ENCODE measurements at regions of chr21 and their contacts with region 1.

Region 1: DNA sequence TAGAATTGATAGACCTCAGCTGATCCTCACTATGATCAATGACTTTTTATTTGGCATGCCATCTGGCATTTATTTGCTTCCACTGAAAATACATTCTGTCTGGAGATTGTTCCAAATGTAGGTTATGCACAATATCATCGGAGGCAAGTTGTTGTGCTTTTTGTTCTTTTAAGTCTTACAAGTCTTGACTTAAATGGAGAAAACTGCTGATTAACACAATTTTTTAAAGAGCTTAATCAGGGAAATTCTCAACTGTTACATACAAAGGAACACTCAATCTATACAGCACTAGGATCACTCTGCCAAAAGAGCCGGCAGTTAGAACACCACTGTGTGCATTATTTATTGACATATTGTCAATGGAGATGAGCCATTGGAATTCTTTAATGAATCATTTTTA is 19.2 kb downstream of the CYYR1 start:
- DNase-seq: no peak
- ATAC-seq: no peak

Region 2: GRCh38 chr21:26389971-26390641 is 163.8 kb before region 1 on chr21:
- intact Hi-C with region 1: no loop called
- DNase-seq: no peak
- ATAC-seq: no peak

Region 3: GRCh38 chr21:26425576-26425975 is 128.3 kb before region 1 on chr21:
- intact Hi-C with region 1: no loop called
- DNase-seq: no peak
- ATAC-seq: no peak

Region 4: GRCh38 chr21:26540651-26541050 is 13.2 kb before region 1 on chr21:
- intact Hi-C with region 1: loop called (anchors 1 kb)
- DNase-seq: no peak
- ATAC-seq: no peak

Measured in sciatic nerve (tissue), 2 donors.